ENCODE measurements at regions of chr2 and their contacts with region 1.

Region 1: DNA sequence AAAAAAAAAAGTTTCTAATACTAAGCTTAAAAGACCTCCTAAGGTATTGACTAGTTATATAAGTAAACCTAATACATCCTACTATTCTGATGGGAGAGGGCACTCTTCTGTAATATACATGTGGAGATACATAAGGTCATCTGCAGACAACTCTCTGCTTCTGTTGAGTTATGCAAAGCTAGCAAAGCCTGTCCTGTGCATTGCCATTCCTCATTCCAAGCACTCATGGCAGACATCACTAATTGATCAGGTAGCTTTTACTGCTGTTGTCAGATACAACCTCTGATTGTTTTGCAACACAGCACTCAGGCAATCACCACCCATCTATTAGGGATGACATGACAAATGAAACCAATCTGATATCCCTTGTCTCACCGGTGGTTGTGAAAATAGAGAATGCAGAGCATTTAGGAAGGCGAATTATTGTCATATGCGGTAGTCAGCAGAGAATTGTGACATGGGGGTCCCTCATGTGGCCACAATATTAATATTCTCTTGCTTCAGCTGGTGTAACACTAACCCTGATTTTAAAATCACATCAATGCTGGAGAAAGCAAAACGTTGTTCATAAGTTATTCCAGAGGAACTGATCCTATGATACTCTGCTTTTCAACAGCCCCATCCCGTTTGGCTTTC is 416.5 kb upstream of the GYPC start:
- DNase-seq: no peak
- H3K4me3 ChIP-seq: no peak overlapping the region
- H3K27ac ChIP-seq: no peak overlapping the region
- H3K4me1 ChIP-seq: no peaks in the 10 kb centered on the region
- H3K27me3 ChIP-seq: no peaks in the 10 kb centered on the region
- CTCF ChIP-seq: no peak
- EP300 ChIP-seq: no peak
- POLR2A ChIP-seq: no peak
- RAD21 ChIP-seq: no peak; a peak in 1 of 4 replicates

Region 2: DNA sequence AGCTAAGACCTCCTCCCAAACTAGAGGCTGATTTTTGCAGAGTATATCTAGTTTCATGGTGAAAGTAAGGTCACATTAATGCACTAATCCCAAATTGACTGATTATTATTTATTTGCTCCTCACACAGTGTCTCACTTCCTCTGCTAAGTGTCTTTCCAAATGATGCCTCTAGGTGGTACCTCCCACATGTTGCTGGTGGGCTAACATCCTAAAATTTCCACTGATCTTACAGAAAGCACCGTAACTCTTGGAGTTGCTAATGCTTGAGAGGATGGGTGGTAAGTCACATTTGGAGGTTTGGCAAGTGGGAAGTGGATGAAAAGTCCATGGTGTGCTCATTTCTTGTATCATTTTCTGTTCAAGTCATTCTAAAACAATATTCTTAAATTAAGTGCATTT is 12.2 kb before region 1 on chr2:
- CTCF ChIA-PET with region 1: interaction called, 13 read pairs
- POLR2A ChIA-PET with region 1: no interaction called
- DNase-seq: no peak
- H3K4me3 ChIP-seq: no peak overlapping the region
- H3K27ac ChIP-seq: no peak overlapping the region
- H3K4me1 ChIP-seq: no peaks in the 10 kb centered on the region
- H3K27me3 ChIP-seq: no peaks in the 10 kb centered on the region
- CTCF ChIP-seq: peak in 2 of 3 experiments; percentile 23 to 63; a peak in 2 of 4 replicates
- EP300 ChIP-seq: no peak
- POLR2A ChIP-seq: no peak
- RAD21 ChIP-seq: peak; percentile 59 to 60

Region 3: GRCh38 chr2:126463892-126464674 is 224.6 kb after region 1 on chr2:
- CTCF ChIA-PET with region 1: no interaction called
- POLR2A ChIA-PET with region 1: no interaction called
- DNase-seq: no peak
- H3K4me3 ChIP-seq: no peak overlapping the region
- H3K27ac ChIP-seq: no peak overlapping the region
- H3K4me1 ChIP-seq: no peaks in the 10 kb centered on the region
- H3K27me3 ChIP-seq: no peaks in the 10 kb centered on the region
- CTCF ChIP-seq: no peak
- EP300 ChIP-seq: no peak
- POLR2A ChIP-seq: no peak
- RAD21 ChIP-seq: no peak